Naive thymus-derived CD4-positive, alpha-beta T cell (primary cell): ENCODE measurements at regions of chr10 and their contacts with region 1.

Region 1: GRCh38 chr10:89207181-89207800 is at the start of gene CH25H:
- DNase-seq: peak; percentile 7 to 54 (median 32)
- ATAC-seq: peak; percentile 52
- H3K4me3 ChIP-seq: peak within 1 kb of the TSS; percentile 61
- H3K4me3 Mint-ChIP-seq: peak within 1 kb of the TSS; percentile 82 to 92 (median 89)
- H3K27ac ChIP-seq: no peak within 1 kb of the TSS
- H3K27ac Mint-ChIP-seq: peak within 1 kb of the TSS in 7 of 9 donors; percentile 27 to 94 (median 73)
- H3K4me1 ChIP-seq: peaks cover 0 to 6% of the 10 kb centered on the region in 2 donors
- H3K4me1 Mint-ChIP-seq: peaks cover 7 to 20% (median 12%) of the 10 kb centered on the region in 7 donors
- H3K27me3 ChIP-seq: peaks cover 0 to 5% of the 10 kb centered on the region in 2 donors
- H3K27me3 Mint-ChIP-seq: peaks cover 30 to 51% (median 41%) of the 10 kb centered on the region in 5 donors
- total RNA-seq, gene CH25H: 0.34 TPM in 1 of 5 experiments, not detected in the others

Region 2: GRCh38 chr10:89029785-89030437 is 177.4 kb before region 1 on chr10:
- CTCF ChIA-PET with region 1: interaction called, 11 read pairs
- POLR2A ChIA-PET with region 1: no interaction called
- intact Hi-C with region 1: no loop called
- DNase-seq: peak; percentile 37 to 68 (median 53)
- ATAC-seq: peak; percentile 85
- H3K4me3 ChIP-seq: no peak overlapping the region
- H3K4me3 Mint-ChIP-seq: peak overlapping the region in 1 of 10 donors; percentile 30
- H3K27ac ChIP-seq: no peak overlapping the region
- H3K27ac Mint-ChIP-seq: no peak overlapping the region
- H3K4me1 ChIP-seq: no peaks in the 10 kb centered on the region
- H3K4me1 Mint-ChIP-seq: peaks cover 0 to 31% (median 0%) of the 10 kb centered on the region in 7 donors
- H3K27me3 ChIP-seq: no peaks in the 10 kb centered on the region
- H3K27me3 Mint-ChIP-seq: no peaks in the 10 kb centered on the region

Region 3: GRCh38 chr10:89079961-89080360 is 127.3 kb before region 1 on chr10:
- CTCF ChIA-PET with region 1: interaction called, 3 read pairs
- POLR2A ChIA-PET with region 1: no interaction called
- intact Hi-C with region 1: loop called in 1 of 2 experiments (anchors 5 kb)
- DNase-seq: no peak
- ATAC-seq: no peak
- H3K4me3 ChIP-seq: no peak overlapping the region
- H3K4me3 Mint-ChIP-seq: no peak overlapping the region
- H3K27ac ChIP-seq: no peak overlapping the region
- H3K27ac Mint-ChIP-seq: peak overlapping the region in 1 of 9 donors; percentile 59
- H3K4me1 ChIP-seq: peaks cover 6 to 9% of the 10 kb centered on the region in 2 donors
- H3K4me1 Mint-ChIP-seq: peaks cover 0 to 30% (median 13%) of the 10 kb centered on the region in 7 donors
- H3K27me3 ChIP-seq: no peaks in the 10 kb centered on the region
- H3K27me3 Mint-ChIP-seq: peaks cover 0 to 2% (median 0%) of the 10 kb centered on the region in 5 donors

Region 4: GRCh38 chr10:89163265-89163995 is 43.9 kb before region 1 on chr10:
- CTCF ChIA-PET with region 1: no interaction called
- POLR2A ChIA-PET with region 1: no interaction called
- intact Hi-C with region 1: loop called in 1 of 2 experiments (anchors 2 kb)
- DNase-seq: peak in 8 of 9 donors; percentile 10 to 57 (median 44)
- ATAC-seq: peak; percentile 88
- H3K4me3 ChIP-seq: peak overlapping the region; percentile 39
- H3K4me3 Mint-ChIP-seq: peak overlapping the region; percentile 26 to 83 (median 80)
- H3K27ac ChIP-seq: no peak overlapping the region
- H3K27ac Mint-ChIP-seq: peak overlapping the region; percentile 40 to 86 (median 74)
- H3K4me1 ChIP-seq: peaks cover 5 to 8% of the 10 kb centered on the region in 2 donors
- H3K4me1 Mint-ChIP-seq: peaks cover 7 to 29% (median 18%) of the 10 kb centered on the region in 7 donors
- H3K27me3 ChIP-seq: no peaks in the 10 kb centered on the region
- H3K27me3 Mint-ChIP-seq: peaks cover 4 to 56% (median 5%) of the 10 kb centered on the region in 5 donors